ENCODE measurements at regions of chr1 and their contacts with region 1.

Region 1: GRCh38 chr1:91948501-91949355 is 473 bp upstream of the BRDT start:
- DNase-seq: peak; percentile 11 to 87 (median 53)
- ATAC-seq: peak; percentile 64 to 88 (median 83)
- H3K4me3 ChIP-seq: peak overlapping the region in 1 of 2 donors; percentile 34
- H3K4me3 Mint-ChIP-seq: peak overlapping the region; percentile 52 to 73 (median 70)
- H3K27ac ChIP-seq: peak overlapping the region; percentile 91
- H3K27ac Mint-ChIP-seq: peak overlapping the region; percentile 94 to 95
- H3K4me1 ChIP-seq: peaks cover 0 to 27% of the 10 kb centered on the region in 2 experiments
- H3K4me1 Mint-ChIP-seq: peaks cover 17 to 18% (median 18%) of the 10 kb centered on the region in 3 donors
- H3K27me3 ChIP-seq: no peaks in the 10 kb centered on the region
- H3K27me3 Mint-ChIP-seq: no peaks in the 10 kb centered on the region

Region 2: GRCh38 chr1:90936731-90937130 is 1012.0 kb before region 1 on chr1:
- CTCF ChIA-PET with region 1: interaction called in 1 of 2 experiments, 12 read pairs
- POLR2A ChIA-PET with region 1: no interaction called
- DNase-seq: no peak
- ATAC-seq: no peak
- H3K4me3 ChIP-seq: no peak overlapping the region
- H3K4me3 Mint-ChIP-seq: no peak overlapping the region
- H3K27ac ChIP-seq: no peak overlapping the region
- H3K27ac Mint-ChIP-seq: no peak overlapping the region
- H3K4me1 ChIP-seq: peaks cover 0 to 4% of the 10 kb centered on the region in 2 experiments
- H3K4me1 Mint-ChIP-seq: peaks cover 73 to 85% (median 78%) of the 10 kb centered on the region in 3 donors
- H3K27me3 ChIP-seq: no peaks in the 10 kb centered on the region
- H3K27me3 Mint-ChIP-seq: no peaks in the 10 kb centered on the region

Region 3: GRCh38 chr1:93358293-93358692 is 1409.6 kb after region 1 on chr1:
- CTCF ChIA-PET with region 1: no interaction called
- POLR2A ChIA-PET with region 1: interaction called in 1 of 2 experiments, 13 read pairs
- DNase-seq: no peak
- ATAC-seq: no peak
- H3K4me3 ChIP-seq: no peak overlapping the region
- H3K4me3 Mint-ChIP-seq: peak overlapping the region in 1 of 3 donors; percentile 15
- H3K27ac ChIP-seq: no peak overlapping the region
- H3K27ac Mint-ChIP-seq: peak overlapping the region in 1 of 2 donors; percentile 23
- H3K4me1 ChIP-seq: peaks cover 7 to 9% of the 10 kb centered on the region in 2 experiments
- H3K4me1 Mint-ChIP-seq: peaks cover 68 to 74% (median 71%) of the 10 kb centered on the region in 3 donors
- H3K27me3 ChIP-seq: no peaks in the 10 kb centered on the region
- H3K27me3 Mint-ChIP-seq: no peaks in the 10 kb centered on the region

Measured in T-cell (primary cell).